CD4-positive, alpha-beta T cell (primary cell): ENCODE measurements at regions of chr5 and their contacts with region 1.

Region 1: GRCh38 chr5:131533836-131534235 is 101.2 kb downstream of the RAPGEF6 start:
- DNase-seq: peak in 2 of 14 experiments; percentile 47 to 49
- ATAC-seq: peak; percentile 32
- H3K4me3 ChIP-seq: no peak overlapping the region
- H3K4me3 Mint-ChIP-seq: peak overlapping the region; percentile 57
- H3K27ac ChIP-seq: peak overlapping the region in 1 of 2 donors; percentile 53
- H3K27ac Mint-ChIP-seq: peak overlapping the region; percentile 84
- H3K4me1 ChIP-seq: peaks cover 23% of the 10 kb centered on the region
- H3K4me1 Mint-ChIP-seq: peaks cover 80% of the 10 kb centered on the region
- H3K27me3 ChIP-seq: no peaks in the 10 kb centered on the region
- H3K27me3 Mint-ChIP-seq: no peaks in the 10 kb centered on the region
- CTCF ChIP-seq: peak; percentile 14

Region 2: GRCh38 chr5:131514316-131515283 is 19.2 kb before region 1 on chr5:
- CTCF ChIA-PET with region 1: interaction called, 6 read pairs
- POLR2A ChIA-PET with region 1: interaction called, 13 read pairs
- intact Hi-C with region 1: loop called in 1 of 2 experiments (anchors 2 kb)
- DNase-seq: peak in 4 of 14 experiments; percentile 38 to 83 (median 79)
- ATAC-seq: peak; percentile 84
- H3K4me3 ChIP-seq: peak overlapping the region; percentile 30
- H3K4me3 Mint-ChIP-seq: peak overlapping the region; percentile 82
- H3K27ac ChIP-seq: peak overlapping the region; percentile 36 to 39
- H3K27ac Mint-ChIP-seq: peak overlapping the region; percentile 84
- H3K4me1 ChIP-seq: peaks cover 29% of the 10 kb centered on the region
- H3K4me1 Mint-ChIP-seq: peaks cover 84% of the 10 kb centered on the region
- H3K27me3 ChIP-seq: no peaks in the 10 kb centered on the region
- H3K27me3 Mint-ChIP-seq: no peaks in the 10 kb centered on the region
- CTCF ChIP-seq: peak; percentile 54

Region 3: DNA sequence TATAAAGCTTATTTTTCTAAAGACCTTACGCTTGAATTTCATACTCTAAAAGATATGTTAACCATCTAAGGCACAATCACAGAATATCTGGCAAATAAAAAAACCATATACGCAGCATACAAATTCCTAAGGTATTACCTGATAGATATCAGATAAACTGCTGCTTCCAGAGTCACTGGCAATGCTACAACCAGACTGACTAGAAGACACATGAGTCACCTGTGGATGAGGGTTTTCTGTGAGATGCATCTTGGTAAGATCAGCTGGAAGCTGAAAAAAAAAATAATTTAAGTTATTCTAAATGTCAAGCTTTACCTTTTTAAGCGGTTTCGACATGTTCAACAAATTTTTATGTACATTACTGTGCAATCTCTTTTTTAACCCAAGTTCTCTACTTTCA is 12.6 kb before region 1 on chr5:
- CTCF ChIA-PET with region 1: interaction called, 15 read pairs
- POLR2A ChIA-PET with region 1: interaction called, 10 read pairs
- intact Hi-C with region 1: no loop called
- DNase-seq: no peak
- ATAC-seq: no peak
- H3K4me3 ChIP-seq: no peak overlapping the region
- H3K4me3 Mint-ChIP-seq: no peak overlapping the region
- H3K27ac ChIP-seq: no peak overlapping the region
- H3K27ac Mint-ChIP-seq: no peak overlapping the region
- H3K4me1 ChIP-seq: peaks cover 10% of the 10 kb centered on the region
- H3K4me1 Mint-ChIP-seq: peaks cover 84% of the 10 kb centered on the region
- H3K27me3 ChIP-seq: no peaks in the 10 kb centered on the region
- H3K27me3 Mint-ChIP-seq: no peaks in the 10 kb centered on the region
- CTCF ChIP-seq: no peak